AG04449 (cell line): ENCODE measurements at regions of chr3 and their contacts with region 1.

Region 1: GRCh38 chr3:179562591-179563270 is at the start of gene ACTL6A:
- DNase-seq: peak; percentile 94
- H3K4me3 ChIP-seq: peak within 1 kb of the TSS; percentile 98
- CTCF ChIP-seq: no peak

Region 2: GRCh38 chr3:179421500-179421899 is 141.2 kb before region 1 on chr3:
- CTCF ChIA-PET with region 1: interaction called, 11 read pairs
- POLR2A ChIA-PET with region 1: no interaction called
- DNase-seq: no peak
- H3K4me3 ChIP-seq: no peak overlapping the region
- CTCF ChIP-seq: peak; percentile 36